ENCODE measurements at regions of chr9 and their contacts with region 1.

Region 1: GRCh38 chr9:132424857-132425686 is 15.1 kb downstream of the CFAP77 start:
- DNase-seq: no peak
- ATAC-seq: no peak
- H3K4me3 ChIP-seq: no peak overlapping the region
- H3K27ac ChIP-seq: no peak overlapping the region
- H3K4me1 ChIP-seq: no peaks in the 10 kb centered on the region
- H3K27me3 ChIP-seq: peaks cover 51% of the 10 kb centered on the region
- CTCF ChIP-seq: no peak
- POLR2A ChIP-seq: no peak
- RAD21 ChIP-seq: no peak

Region 2: DNA sequence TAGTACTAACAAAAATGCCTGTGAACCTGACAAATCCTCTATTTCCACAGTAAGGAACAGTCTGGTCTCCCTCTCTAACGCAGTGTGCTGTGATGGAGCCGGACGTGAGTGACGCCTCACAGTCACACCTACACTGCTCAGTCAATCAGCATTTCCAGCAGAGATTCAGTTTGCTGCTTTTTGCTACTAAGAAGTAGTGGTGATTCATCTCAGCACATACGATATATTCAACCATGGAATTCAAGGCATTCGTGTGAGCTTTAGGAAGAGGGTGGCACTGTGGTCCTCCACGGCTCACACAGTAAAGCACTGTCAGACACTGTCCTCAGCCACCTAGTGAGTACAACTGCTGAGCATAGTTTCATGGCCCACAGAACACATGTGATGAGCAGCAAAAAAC is 141.2 kb before region 1 on chr9:
- CTCF ChIA-PET with region 1: no interaction called
- POLR2A ChIA-PET with region 1: no interaction called
- dilution Hi-C with region 1: no loop called
- in situ Hi-C with region 1: no loop called
- intact Hi-C with region 1: no loop called
- DNase-seq: peak; percentile 86
- ATAC-seq: peak; percentile 89
- H3K4me3 ChIP-seq: no peak overlapping the region
- H3K27ac ChIP-seq: peak overlapping the region; percentile 39; the same call in 1 of the 2 replicates
- H3K4me1 ChIP-seq: peaks cover 12% of the 10 kb centered on the region
- H3K27me3 ChIP-seq: no peaks in the 10 kb centered on the region
- CTCF ChIP-seq: no peak
- POLR2A ChIP-seq: no peak
- RAD21 ChIP-seq: no peak

Region 3: GRCh38 chr9:132568817-132569216 is 143.7 kb after region 1 on chr9:
- CTCF ChIA-PET with region 1: no interaction called
- POLR2A ChIA-PET with region 1: no interaction called
- dilution Hi-C with region 1: no loop called
- in situ Hi-C with region 1: loop called (anchors 5 kb)
- intact Hi-C with region 1: no loop called
- DNase-seq: no peak
- ATAC-seq: no peak
- H3K4me3 ChIP-seq: no peak overlapping the region
- H3K27ac ChIP-seq: no peak overlapping the region
- H3K4me1 ChIP-seq: no peaks in the 10 kb centered on the region
- H3K27me3 ChIP-seq: peaks cover 50% of the 10 kb centered on the region
- CTCF ChIP-seq: no peak
- POLR2A ChIP-seq: no peak
- RAD21 ChIP-seq: no peak